ENCODE measurements at regions of chr1 and their contacts with region 1.

Region 1: DNA sequence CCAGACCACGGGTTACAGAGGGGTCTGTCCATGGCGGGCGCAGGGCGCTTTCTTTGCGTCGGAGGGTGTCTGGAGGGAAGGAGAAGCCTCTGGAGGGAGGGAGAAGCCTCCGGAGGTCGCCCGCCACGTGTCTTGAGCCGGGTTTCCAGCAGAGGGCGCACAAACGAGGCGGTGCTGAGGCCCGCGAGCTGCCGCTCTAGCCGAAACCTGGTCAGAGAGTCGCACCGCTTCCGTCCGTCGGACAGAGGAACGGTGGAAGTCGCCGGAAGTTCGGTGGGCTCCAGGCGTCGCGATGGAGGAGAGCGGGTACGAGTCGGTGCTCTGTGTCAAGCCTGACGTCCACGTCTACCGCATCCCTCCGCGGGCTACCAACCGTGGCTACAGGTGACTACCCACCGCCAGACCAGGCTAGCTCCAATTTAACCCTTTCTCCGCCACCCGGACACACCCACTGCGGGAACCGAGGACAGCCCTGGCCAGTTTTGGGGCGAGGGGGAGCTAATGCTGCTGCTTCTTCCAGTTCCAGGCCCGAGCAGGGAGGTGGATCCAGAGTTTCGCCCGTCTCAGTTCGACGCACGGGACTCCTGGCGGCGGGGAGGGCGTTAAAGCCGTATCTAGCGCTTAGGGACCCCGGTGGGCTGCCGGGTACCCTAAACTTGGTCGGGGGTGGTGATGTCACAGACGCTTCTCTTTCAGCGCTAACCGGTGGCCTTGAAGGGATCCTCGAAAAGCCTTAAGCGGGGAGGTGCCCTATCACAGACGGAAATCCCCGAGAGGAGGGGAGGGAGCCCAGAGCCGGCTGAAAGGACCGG is at the start of gene NECAP2:
- DNase-seq: peak; percentile 98
- ATAC-seq: peak; percentile 91
- H3K4me3 Mint-ChIP-seq: peak within 1 kb of the TSS; percentile 88
- H3K27ac Mint-ChIP-seq: peak within 1 kb of the TSS; percentile 78
- H3K4me1 Mint-ChIP-seq: peaks cover 4% of the 10 kb centered on the region; the same call in 1 of the 2 replicates
- H3K27me3 Mint-ChIP-seq: peaks cover 9% of the 10 kb centered on the region; the same call in 1 of the 2 replicates
- CTCF ChIP-seq: peak; percentile 60
- total RNA-seq, gene NECAP2: 29.8 to 33.9 TPM (median 30.4 TPM) in 3 replicates

Region 2: GRCh38 chr1:16409536-16410152 is 31.0 kb before region 1 on chr1:
- CTCF ChIA-PET with region 1: interaction called, 10 read pairs
- POLR2A ChIA-PET with region 1: no interaction called
- DNase-seq: no peak
- ATAC-seq: peak; percentile 36; the same call in 1 of the 2 replicates
- H3K4me3 Mint-ChIP-seq: no peak overlapping the region
- H3K27ac Mint-ChIP-seq: no peak overlapping the region
- H3K4me1 Mint-ChIP-seq: peaks cover 8% of the 10 kb centered on the region
- H3K27me3 Mint-ChIP-seq: no peaks in the 10 kb centered on the region
- CTCF ChIP-seq: no peak

Region 3: DNA sequence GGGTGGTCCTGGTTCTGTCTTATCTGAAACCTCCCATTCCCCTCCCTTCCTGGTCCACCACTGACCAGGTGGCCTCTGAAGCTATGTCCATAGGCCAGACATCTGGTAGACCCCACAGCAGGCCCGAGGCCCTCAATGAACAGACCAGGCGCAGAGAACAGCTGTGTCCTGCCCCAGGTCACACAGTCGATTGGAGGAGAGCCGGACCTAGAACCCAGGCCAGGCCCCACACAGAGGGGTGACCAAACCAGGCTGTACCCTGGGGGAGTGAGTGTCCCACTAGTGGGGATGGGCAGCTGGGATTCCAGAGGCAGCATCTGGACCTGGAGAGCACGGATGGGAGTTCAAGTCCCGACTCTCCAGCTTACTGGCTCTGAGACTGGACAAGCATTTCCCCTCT is 44.3 kb after region 1 on chr1:
- CTCF ChIA-PET with region 1: interaction called, 10 read pairs
- POLR2A ChIA-PET with region 1: no interaction called
- DNase-seq: no peak
- ATAC-seq: no peak
- H3K4me3 Mint-ChIP-seq: no peak overlapping the region
- H3K27ac Mint-ChIP-seq: no peak overlapping the region
- H3K4me1 Mint-ChIP-seq: no peaks in the 10 kb centered on the region
- H3K27me3 Mint-ChIP-seq: no peaks in the 10 kb centered on the region; the same call in 1 of the 2 replicates
- CTCF ChIP-seq: no peak